Dorsolateral prefrontal cortex (tissue), 120 donors: ENCODE measurements at regions of chr6 and their contacts with region 1.

Region 1: GRCh38 chr6:36678518-36679027 is at the start of gene CDKN1A:
- DNase-seq: peak; percentile 56 to 92 (median 81)
- H3K4me3 ChIP-seq: peak within 1 kb of the TSS; percentile 48 to 91 (median 78)
- H3K27ac ChIP-seq: peak within 1 kb of the TSS; percentile 52 to 98 (median 94)
- H3K27me3 ChIP-seq: no peaks in the 10 kb centered on the region
- CTCF ChIP-seq: peak in 26 of 56 donors; percentile 4 to 52 (median 23)
- total RNA-seq, gene CDKN1A: 8.3 to 193 (median 29.3) TPM

Region 2: GRCh38 chr6:36302227-36302976 is 376.2 kb before region 1 on chr6:
- intact Hi-C with region 1: loop called in 1 of 2 experiments (anchors 5 kb)
- DNase-seq: peak; percentile 51 to 95 (median 76)
- H3K4me3 ChIP-seq: peak overlapping the region in 1 of 59 donors; percentile 8
- H3K27ac ChIP-seq: no peak overlapping the region
- H3K27me3 ChIP-seq: no peaks in the 10 kb centered on the region
- CTCF ChIP-seq: peak; percentile 78 to 98 (median 94)

Region 3: GRCh38 chr6:36442671-36443470 is 235.7 kb before region 1 on chr6 and contains the starts of genes KCTD20 and PXT1:
- intact Hi-C with region 1: loop called in 1 of 2 experiments (anchors 5 kb)
- DNase-seq: peak; percentile 77 to 92 (median 87)
- H3K4me3 ChIP-seq: peak within 1 kb of the TSS; percentile 74 to 99 (median 92)
- H3K27ac ChIP-seq: peak within 1 kb of the TSS; percentile 68 to 99 (median 96)
- H3K27me3 ChIP-seq: no peaks in the 10 kb centered on the region
- CTCF ChIP-seq: peak in 24 of 56 donors; percentile 7 to 57 (median 24)
- total RNA-seq, gene KCTD20: 25.8 to 51.1 (median 35.6) TPM
- total RNA-seq, gene PXT1: 0.17 to 1.1 (median 0.34) TPM in 51 of 120 experiments, not detected in the others

Region 4: GRCh38 chr6:36623547-36624459 is 54.8 kb before region 1 on chr6:
- intact Hi-C with region 1: loop called (anchors 1 kb)
- DNase-seq: peak; percentile 59 to 83 (median 78)
- H3K4me3 ChIP-seq: no peak overlapping the region
- H3K27ac ChIP-seq: peak overlapping the region in 21 of 59 donors; percentile 10 to 73 (median 55)
- H3K27me3 ChIP-seq: no peaks in the 10 kb centered on the region
- CTCF ChIP-seq: peak; percentile 71 to 94 (median 88)

Region 5: DNA sequence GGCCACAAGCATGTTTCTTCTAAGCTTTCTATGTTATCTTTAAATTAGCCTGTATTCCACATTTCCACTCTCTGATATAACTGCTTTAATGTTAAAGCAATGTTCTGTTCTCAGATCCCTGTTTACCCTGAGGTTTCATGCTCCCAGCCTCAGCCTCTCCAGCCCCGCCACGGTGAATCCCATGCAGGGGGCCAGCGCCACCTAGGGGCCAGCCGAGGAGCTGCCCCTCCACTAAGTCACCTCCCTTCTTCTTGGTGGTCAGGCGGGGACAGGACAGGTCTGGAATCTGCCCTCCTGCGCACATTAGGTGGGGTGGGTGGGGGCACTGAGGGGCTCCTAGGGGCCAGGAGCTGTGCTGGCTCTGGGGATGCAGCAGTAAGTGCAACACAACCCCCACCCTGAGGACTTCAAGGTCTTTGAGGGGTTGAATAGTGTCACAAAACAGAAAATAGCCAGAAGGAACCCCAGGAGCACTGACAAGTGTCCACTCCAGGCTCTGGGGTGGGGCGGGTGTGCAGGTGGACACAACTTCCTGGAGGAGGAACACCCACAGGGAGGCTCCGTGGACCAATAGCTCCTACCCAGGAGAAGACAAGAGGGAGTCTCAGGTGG is 80.7 kb after region 1 on chr6:
- intact Hi-C with region 1: loop called (anchors 2 to 5 kb)
- DNase-seq: peak; percentile 73 to 89 (median 82)
- H3K4me3 ChIP-seq: no peak overlapping the region
- H3K27ac ChIP-seq: peak overlapping the region in 21 of 59 donors; percentile 5 to 98 (median 93)
- H3K27me3 ChIP-seq: no peaks in the 10 kb centered on the region
- CTCF ChIP-seq: peak; percentile 78 to 98 (median 95)